Mammary epithelial cell (primary cell): ENCODE measurements at regions of chr1 and their contacts with region 1.

Region 1: DNA sequence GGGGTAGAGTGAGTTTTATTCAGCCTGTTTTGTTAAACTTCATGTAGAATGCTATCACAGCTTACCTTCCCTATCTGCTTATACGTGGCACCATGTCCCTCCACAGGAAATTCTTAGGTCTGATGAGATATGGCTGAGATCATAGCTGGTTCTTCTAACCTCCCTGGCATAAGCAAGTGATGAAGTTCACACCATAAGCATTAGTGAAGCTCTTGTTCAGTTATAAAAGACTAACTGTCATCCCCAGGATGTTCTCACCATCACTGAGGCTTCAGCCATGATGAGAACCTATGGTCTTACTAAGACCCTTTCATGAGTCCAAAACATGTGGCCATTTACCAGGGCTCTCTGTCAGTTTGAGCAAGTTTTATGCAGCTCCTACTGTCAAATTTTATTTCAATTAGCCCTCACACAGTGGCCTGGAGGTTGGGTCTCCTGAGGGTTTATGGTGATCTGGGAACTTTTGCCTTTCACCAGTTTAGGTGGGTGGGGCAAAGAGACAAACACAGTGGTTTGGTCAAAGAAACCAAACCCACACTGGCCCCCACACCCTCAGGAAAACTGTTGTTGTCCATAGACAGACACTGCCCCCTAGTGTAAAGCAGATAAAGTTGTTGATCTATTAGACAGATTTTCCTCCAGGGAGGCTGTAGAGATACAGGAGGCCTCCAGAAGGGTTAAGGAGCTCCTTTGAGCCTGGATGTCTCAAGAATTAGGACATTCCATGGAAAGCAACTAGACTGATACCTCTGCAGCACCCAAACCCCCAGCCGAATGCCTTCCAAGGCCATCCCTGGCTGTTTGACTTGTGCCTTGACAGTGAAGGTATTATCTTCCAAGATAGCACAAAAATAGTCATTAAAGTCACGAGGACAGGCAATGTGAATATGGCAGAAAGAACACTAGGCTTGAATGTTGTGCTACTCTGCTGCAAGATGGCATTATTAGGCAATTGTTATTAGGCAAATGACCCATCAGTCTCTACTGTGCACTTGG is 5.0 kb downstream of the SLC22A15 start:
- DNase-seq: peak; percentile 51
- H3K4me3 ChIP-seq: no peak overlapping the region
- H3K27ac ChIP-seq: peak overlapping the region; percentile 9
- H3K4me1 ChIP-seq: peaks cover 29% of the 10 kb centered on the region
- H3K27me3 ChIP-seq: no peaks in the 10 kb centered on the region
- CTCF ChIP-seq: peak; percentile 54 to 69

Region 2: DNA sequence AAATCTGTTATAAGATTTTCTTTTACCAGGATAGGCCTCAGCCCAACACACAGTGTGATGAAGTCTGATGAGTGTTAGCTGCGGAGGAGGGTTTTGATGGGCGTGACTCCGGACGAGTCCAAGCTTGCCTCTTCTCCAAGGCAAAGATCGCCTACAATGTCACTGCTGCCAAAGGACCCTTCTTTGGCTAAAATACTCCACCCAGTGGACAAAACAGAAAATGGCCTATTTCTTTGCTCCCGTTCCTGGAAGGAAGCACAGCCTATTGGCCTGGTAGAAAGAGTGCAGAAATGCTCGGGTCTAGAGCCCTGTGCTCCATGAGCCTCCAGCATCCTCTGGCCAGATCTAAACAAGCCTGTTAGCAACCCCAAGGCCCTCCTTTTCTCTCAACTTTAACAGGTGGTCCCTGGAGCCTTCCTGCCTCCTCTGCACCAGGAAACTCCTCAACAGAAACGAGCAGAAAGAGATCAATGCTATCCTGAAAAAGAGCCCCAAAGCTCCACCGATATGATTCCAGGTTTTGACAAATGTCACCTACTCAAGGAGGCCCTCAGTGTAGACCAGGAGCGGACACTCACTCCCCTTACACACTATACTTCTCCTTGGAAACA is 209.3 kb before region 1 on chr1:
- CTCF ChIA-PET with region 1: interaction called, 3 read pairs
- dilution Hi-C with region 1: no loop called
- in situ Hi-C with region 1: no loop called
- intact Hi-C with region 1: loop called (anchors 1 kb)
- DNase-seq: peak; percentile 94
- H3K4me3 ChIP-seq: no peak overlapping the region
- H3K27ac ChIP-seq: peak overlapping the region; percentile 86
- H3K4me1 ChIP-seq: peaks cover 6% of the 10 kb centered on the region
- H3K27me3 ChIP-seq: no peaks in the 10 kb centered on the region
- CTCF ChIP-seq: peak; percentile 80 to 87

Region 3: DNA sequence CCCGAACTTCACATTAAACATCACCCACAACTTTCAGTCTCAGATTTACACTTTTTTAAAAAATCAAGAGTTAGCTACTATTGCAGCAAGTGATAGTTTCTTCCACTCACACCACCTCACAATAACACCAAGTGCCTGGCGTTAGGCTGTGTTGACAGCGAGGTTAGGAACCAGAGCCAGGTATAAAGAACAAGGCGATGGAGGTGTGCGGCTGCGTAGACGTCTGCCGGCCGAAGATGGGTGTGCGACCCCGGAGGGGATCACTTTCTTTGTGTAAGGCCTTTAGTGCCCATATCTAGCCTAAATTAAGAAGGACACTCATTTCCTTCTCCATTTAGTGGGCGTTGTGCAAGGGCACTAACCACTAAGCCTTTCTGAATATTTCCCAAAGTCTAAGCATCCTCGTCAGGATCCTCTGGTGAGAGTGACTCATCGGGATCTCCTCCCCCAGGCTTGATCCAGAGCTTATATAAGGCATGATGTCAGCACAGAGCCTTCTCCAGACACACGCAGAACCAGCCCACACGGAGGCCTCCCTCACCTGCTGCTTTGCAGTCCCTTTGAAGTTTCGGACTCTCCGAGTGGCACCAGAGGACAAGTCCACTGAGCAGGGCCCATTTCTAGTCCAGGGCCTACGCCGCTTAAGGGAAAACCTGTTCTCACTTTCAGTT is 152.1 kb before region 1 on chr1:
- CTCF ChIA-PET with region 1: no interaction called
- dilution Hi-C with region 1: no loop called
- in situ Hi-C with region 1: no loop called
- intact Hi-C with region 1: no loop called
- DNase-seq: peak; percentile 93
- H3K4me3 ChIP-seq: no peak overlapping the region
- H3K27ac ChIP-seq: no peak overlapping the region
- H3K4me1 ChIP-seq: peaks cover 9% of the 10 kb centered on the region
- H3K27me3 ChIP-seq: no peaks in the 10 kb centered on the region
- CTCF ChIP-seq: no peak

Region 4: GRCh38 chr1:115933625-115934024 is 47.7 kb before region 1 on chr1:
- CTCF ChIA-PET with region 1: no interaction called
- dilution Hi-C with region 1: no loop called
- in situ Hi-C with region 1: no loop called
- intact Hi-C with region 1: no loop called
- DNase-seq: no peak
- H3K4me3 ChIP-seq: no peak overlapping the region
- H3K27ac ChIP-seq: no peak overlapping the region
- H3K4me1 ChIP-seq: no peaks in the 10 kb centered on the region
- H3K27me3 ChIP-seq: no peaks in the 10 kb centered on the region
- CTCF ChIP-seq: no peak